Dorsolateral prefrontal cortex (tissue), 120 donors: ENCODE measurements at regions of chr11 and their contacts with region 1.

Region 1: DNA sequence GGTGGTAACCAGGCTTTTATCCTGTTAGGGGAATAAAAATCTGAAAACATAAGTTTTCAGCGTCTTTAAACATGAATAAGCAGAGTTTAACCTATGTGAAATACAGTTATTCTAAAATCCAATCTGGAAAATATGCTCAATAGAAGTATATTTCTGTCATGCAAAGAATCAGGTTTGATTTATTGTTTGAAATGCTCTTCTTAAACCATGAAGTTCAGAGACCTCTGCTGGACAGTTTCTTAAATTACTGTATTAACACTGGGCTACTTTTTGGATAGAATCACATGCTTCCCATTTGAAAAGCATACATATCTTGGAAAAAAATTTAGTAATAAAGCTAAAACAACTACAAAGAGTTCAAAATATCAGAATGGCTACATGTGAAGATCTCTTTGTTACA is 25.4 kb downstream of the APIP start:
- DNase-seq: no peak
- H3K4me3 ChIP-seq: no peak overlapping the region
- H3K27ac ChIP-seq: peak overlapping the region in 8 of 59 donors; percentile 6 to 66 (median 26)
- H3K27me3 ChIP-seq: no peaks in the 10 kb centered on the region
- CTCF ChIP-seq: peak; percentile 39 to 90 (median 72)

Region 2: GRCh38 chr11:34585735-34586487 is 304.9 kb before region 1 on chr11:
- intact Hi-C with region 1: loop called (anchors 1 to 2 kb)
- DNase-seq: no peak
- H3K4me3 ChIP-seq: peak overlapping the region in 35 of 59 donors; percentile 3 to 54 (median 24)
- H3K27ac ChIP-seq: peak overlapping the region in 35 of 59 donors; percentile 1 to 72 (median 37)
- H3K27me3 ChIP-seq: no peaks in the 10 kb centered on the region
- CTCF ChIP-seq: peak; percentile 65 to 95 (median 84)